ENCODE measurements at regions of chr19 and their contacts with region 1.

Region 1: DNA sequence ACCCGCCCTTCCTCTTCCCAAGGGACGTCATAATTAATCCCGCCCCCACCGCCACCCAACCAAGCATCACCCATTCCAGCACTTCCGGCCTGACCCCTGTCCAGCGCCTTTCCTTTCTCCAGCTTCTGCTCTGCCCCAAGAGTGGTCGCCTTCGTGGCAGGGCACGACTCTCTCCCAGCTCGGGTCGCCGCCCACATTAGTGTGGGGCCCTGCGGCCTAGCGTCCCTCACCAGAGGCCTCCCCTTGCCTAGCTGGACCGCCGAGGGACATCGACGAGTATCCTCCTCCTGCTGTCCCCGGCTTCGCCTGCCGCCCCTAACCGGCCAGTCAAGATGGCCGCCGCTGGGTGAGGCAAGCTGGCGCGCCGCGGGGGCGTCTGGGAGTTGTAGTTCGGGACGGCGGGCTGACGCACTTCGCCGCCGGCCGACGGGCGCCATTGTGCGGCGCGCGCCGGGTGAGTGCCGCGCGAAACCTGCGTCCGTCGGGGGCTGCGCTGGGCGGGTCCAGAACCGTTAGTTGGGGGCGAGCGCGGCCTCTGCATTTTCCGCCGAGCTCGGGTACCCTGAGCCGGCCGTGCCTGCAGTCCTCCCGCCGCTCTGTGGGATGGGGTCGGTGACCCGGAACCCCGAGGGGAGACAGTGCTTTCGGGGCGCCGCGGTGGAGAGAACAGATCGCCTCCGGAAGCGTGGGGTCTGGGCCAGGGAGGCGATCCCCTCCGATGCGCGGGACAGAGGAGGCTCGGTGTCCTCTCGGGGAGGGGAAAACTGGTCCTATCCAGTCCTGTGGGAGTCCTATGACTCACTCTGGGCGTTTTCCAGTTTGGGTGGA is at the start of gene ZNF274:
- DNase-seq: peak; percentile 83 to 93 (median 90)
- H3K4me3 ChIP-seq: peak within 1 kb of the TSS; percentile 62 to 100 (median 90)
- H3K27ac ChIP-seq: peak within 1 kb of the TSS; percentile 86 to 100 (median 98)
- H3K27me3 ChIP-seq: no peaks in the 10 kb centered on the region
- CTCF ChIP-seq: peak in 19 of 56 donors; percentile 4 to 37 (median 21)
- total RNA-seq, gene ZNF274: 9.8 to 36.6 (median 18.7) TPM

Region 2: GRCh38 chr19:58097781-58098681 is 85.2 kb before region 1 on chr19 and contains the start of gene ZSCAN18:
- intact Hi-C with region 1: loop called in 1 of 2 experiments (anchors 2 kb)
- DNase-seq: peak; percentile 98 to 99 (median 98)
- H3K4me3 ChIP-seq: peak within 1 kb of the TSS; percentile 72 to 100 (median 98)
- H3K27ac ChIP-seq: peak within 1 kb of the TSS; percentile 7 to 99 (median 92)
- H3K27me3 ChIP-seq: no peaks in the 10 kb centered on the region
- CTCF ChIP-seq: peak in 20 of 56 donors; percentile 2 to 49 (median 14)
- total RNA-seq, gene ZSCAN18: 140 to 230 (median 177) TPM

Region 3: DNA sequence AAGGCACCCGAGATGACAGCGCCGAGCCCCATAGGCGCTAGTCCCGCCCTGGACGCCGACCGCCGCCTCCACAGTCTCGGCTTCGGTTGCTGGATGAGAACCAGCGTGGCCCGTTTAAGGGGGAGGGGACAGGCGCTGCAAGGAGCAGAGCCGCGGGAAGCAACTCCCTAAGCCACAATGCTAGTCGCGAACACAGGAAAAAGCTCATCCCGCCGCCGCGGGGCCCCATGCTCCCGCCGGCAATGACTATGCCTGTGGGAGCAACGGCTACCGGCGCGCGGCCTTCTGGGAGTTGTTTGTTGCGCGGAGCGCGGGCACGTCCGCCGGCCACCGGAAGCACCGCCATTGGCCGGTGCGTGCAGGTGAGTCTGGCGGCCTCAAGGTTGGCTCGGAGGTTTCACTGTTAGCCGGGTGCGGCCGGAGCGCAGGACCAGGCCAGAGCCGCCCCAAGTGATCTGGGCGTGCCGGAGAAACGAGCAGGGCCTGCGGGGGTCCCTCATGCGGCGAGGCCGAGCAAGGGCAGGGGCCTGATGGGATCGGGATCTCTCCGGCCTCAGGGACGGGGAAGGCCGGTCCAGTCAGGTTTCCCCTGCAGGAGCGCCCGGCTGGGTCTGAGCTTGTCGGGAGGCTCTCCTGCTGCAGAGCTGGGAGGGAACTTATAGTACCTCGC is 45.5 kb after region 1 on chr19 and contains the start of gene ZNF544:
- intact Hi-C with region 1: no loop called
- DNase-seq: peak; percentile 60 to 89 (median 82)
- H3K4me3 ChIP-seq: peak within 1 kb of the TSS; percentile 55 to 93 (median 82)
- H3K27ac ChIP-seq: peak within 1 kb of the TSS in 57 of 59 donors; percentile 17 to 94 (median 84)
- H3K27me3 ChIP-seq: no peaks in the 10 kb centered on the region
- CTCF ChIP-seq: peak in 20 of 56 donors; percentile 8 to 38 (median 22)
- total RNA-seq, gene ZNF544: 20.9 to 59.3 (median 39.5) TPM

Region 4: GRCh38 chr19:58278157-58279041 is 95.2 kb after region 1 on chr19 and contains the start of gene ZNF8:
- intact Hi-C with region 1: loop called in 1 of 2 experiments (anchors 2 kb)
- DNase-seq: peak; percentile 95 to 98 (median 96)
- H3K4me3 ChIP-seq: peak within 1 kb of the TSS; percentile 59 to 99 (median 92)
- H3K27ac ChIP-seq: peak within 1 kb of the TSS; percentile 65 to 97 (median 88)
- H3K27me3 ChIP-seq: no peaks in the 10 kb centered on the region
- CTCF ChIP-seq: peak in 45 of 56 donors; percentile 16 to 64 (median 43)
- total RNA-seq, gene ZNF8: 7.8 to 17.2 (median 10.9) TPM

Measured in dorsolateral prefrontal cortex (tissue), 120 donors.